Endothelial cell of umbilical vein (primary cell): ENCODE measurements at regions of chr20 and their contacts with region 1.

Region 1: DNA sequence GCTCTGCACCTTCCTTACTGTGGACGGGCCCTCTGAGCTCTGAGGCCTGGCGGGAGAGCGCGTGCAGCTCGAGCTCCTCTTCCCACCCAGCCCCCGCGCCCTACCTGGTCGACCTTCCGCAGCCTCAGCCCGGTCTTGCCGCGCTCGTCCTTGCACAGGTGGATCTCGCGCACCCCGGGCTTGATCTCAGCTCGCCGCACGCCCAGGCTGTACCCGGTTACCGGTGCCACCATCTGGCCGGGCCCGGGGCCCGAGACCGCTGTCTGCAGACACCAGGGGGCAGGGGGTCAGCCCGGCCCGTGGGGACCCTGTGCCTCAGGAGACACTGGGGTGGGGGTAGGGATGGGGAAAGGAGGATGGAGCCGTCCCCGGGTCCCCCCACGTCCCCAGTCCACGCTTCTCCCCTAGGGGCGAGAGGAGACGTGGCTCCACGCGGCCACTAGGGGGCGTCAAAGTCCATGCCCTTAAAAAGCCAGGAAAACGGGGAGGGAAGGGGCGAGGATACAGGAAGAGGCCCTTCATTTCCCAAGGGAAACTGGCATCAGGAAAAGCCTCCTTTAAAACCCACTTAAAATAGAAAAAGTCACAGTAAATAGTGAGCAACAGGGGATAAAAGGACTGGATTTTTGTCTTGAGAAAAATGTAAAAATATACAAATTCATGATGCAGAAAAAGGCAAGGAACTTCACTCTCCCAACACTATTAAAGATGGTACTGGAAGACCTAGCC is 15.5 kb downstream of the SDCBP2 start:
- DNase-seq: peak; percentile 78
- H3K4me3 ChIP-seq: peak overlapping the region in 1 of 3 experiments; percentile 8
- H3K27ac ChIP-seq: peak overlapping the region; percentile 61
- H3K4me1 ChIP-seq: peaks cover 9% of the 10 kb centered on the region
- H3K27me3 ChIP-seq: no peaks in the 10 kb centered on the region
- CTCF ChIP-seq: peak; percentile 89 to 95
- POLR2A ChIP-seq: no peak

Region 2: DNA sequence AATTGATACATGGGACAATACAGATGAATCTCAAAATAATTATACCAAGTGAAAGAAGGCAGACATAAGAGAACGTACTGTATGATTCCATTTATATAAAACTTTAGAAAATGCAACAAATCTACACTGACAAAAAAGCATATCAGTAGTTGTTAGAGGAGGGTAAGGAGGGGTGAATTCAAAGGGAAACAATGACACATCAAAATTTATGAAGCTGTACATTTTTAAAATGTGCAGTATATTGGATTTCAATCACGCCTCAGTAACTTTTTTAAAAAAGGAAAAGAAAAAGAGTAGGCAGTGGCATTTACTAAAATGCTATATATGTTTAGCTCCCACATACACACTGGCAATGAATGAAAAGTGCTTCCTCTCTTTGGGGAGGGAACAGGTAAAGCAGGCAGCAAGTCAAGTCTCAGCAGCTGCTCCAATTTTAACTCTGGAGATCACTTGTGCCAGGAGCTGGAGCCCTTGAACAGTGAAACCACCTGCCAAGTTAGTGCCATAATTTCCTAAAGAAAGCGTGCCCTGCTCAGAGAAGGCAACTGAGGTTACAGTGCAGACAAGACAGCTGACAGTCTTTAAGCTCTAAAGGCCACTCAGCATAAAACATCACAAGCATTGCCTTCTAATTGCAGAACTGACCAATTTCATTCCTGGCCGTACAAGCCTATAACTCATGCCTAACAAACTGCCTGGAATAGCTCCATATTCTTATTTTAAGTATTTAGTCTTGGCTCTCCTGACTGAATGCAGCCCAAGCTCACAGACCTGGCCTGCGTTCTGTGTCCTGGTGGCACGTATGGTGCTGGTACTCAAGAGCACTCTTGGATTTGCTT is 68.6 kb after region 1 on chr20:
- CTCF ChIA-PET with region 1: interaction called, 11 read pairs
- POLR2A ChIA-PET with region 1: no interaction called
- dilution Hi-C with region 1: no loop called
- intact Hi-C with region 1: no loop called
- DNase-seq: no peak
- H3K4me3 ChIP-seq: no peak overlapping the region
- H3K27ac ChIP-seq: peak overlapping the region; percentile 9
- H3K4me1 ChIP-seq: peaks cover 95% of the 10 kb centered on the region
- H3K27me3 ChIP-seq: no peaks in the 10 kb centered on the region
- CTCF ChIP-seq: no peak
- POLR2A ChIP-seq: peak; percentile 48